Thyroid gland (tissue), 4 donors: ENCODE measurements at regions of chr3 and their contacts with region 1.

Region 1: DNA sequence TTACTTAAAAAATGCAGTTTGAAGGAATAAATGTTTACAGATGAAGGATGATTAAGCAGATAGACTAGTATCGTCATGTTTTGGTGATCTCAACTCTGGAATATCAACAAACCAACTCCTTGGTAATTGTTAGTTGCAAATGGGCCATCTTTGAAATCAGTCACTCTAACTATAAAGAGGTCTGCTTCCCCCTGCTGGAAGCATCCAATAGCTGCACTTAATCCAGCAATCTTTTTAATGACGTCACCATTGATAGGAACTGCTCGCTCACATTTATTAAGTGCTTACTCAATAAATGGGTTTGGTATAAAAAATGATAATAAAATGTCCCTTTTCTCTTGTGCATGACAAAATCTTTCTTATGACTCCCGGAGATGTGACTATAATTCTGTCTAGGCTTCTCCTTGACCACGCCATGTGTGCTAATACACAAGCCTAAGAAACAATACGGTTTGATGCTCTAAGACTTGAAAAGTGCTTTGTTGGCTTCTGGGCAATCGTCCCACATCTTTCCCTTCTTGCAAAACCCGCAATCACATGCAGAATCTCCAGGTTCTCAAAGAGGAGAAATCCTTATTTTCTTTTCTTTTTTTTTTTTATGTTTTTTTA is 227.6 kb upstream of the POU1F1 start:
- DNase-seq: peak; percentile 42 to 53
- H3K4me3 ChIP-seq: no peak overlapping the region
- H3K27ac ChIP-seq: no peak overlapping the region
- H3K4me1 ChIP-seq: no peaks in the 10 kb centered on the region
- H3K27me3 ChIP-seq: no peaks in the 10 kb centered on the region
- CTCF ChIP-seq: peak; percentile 30 to 97 (median 78)
- POLR2A ChIP-seq: no peak

Region 2: GRCh38 chr3:87191175-87191574 is 312.8 kb before region 1 on chr3:
- intact Hi-C with region 1: no loop called
- DNase-seq: no peak
- H3K4me3 ChIP-seq: no peak overlapping the region
- H3K27ac ChIP-seq: no peak overlapping the region
- H3K4me1 ChIP-seq: no peaks in the 10 kb centered on the region
- H3K27me3 ChIP-seq: no peaks in the 10 kb centered on the region
- CTCF ChIP-seq: no peak
- POLR2A ChIP-seq: no peak

Region 3: GRCh38 chr3:87350364-87351199 is 153.4 kb before region 1 on chr3:
- intact Hi-C with region 1: loop called (anchors 5 kb)
- DNase-seq: peak in 1 of 2 donors; percentile 14
- H3K4me3 ChIP-seq: no peak overlapping the region
- H3K27ac ChIP-seq: no peak overlapping the region
- H3K4me1 ChIP-seq: no peaks in the 10 kb centered on the region
- H3K27me3 ChIP-seq: no peaks in the 10 kb centered on the region
- CTCF ChIP-seq: peak; percentile 46 to 94 (median 88)
- POLR2A ChIP-seq: no peak